AG04449 (cell line): ENCODE measurements at regions of chr5 and their contacts with region 1.

Region 1: GRCh38 chr5:150272526-150272925 is 17.0 kb downstream of the CAMK2A start:
- DNase-seq: no peak
- H3K4me3 ChIP-seq: no peak overlapping the region
- CTCF ChIP-seq: peak; percentile 81

Region 2: GRCh38 chr5:150082374-150082773 is 190.2 kb before region 1 on chr5:
- CTCF ChIA-PET with region 1: no interaction called
- POLR2A ChIA-PET with region 1: no interaction called
- DNase-seq: no peak
- H3K4me3 ChIP-seq: no peak overlapping the region
- CTCF ChIP-seq: no peak

Region 3: GRCh38 chr5:150386024-150386864 is 113.7 kb after region 1 on chr5:
- CTCF ChIA-PET with region 1: no interaction called
- POLR2A ChIA-PET with region 1: no interaction called
- DNase-seq: no peak
- H3K4me3 ChIP-seq: no peak overlapping the region
- CTCF ChIP-seq: no peak

Region 4: DNA sequence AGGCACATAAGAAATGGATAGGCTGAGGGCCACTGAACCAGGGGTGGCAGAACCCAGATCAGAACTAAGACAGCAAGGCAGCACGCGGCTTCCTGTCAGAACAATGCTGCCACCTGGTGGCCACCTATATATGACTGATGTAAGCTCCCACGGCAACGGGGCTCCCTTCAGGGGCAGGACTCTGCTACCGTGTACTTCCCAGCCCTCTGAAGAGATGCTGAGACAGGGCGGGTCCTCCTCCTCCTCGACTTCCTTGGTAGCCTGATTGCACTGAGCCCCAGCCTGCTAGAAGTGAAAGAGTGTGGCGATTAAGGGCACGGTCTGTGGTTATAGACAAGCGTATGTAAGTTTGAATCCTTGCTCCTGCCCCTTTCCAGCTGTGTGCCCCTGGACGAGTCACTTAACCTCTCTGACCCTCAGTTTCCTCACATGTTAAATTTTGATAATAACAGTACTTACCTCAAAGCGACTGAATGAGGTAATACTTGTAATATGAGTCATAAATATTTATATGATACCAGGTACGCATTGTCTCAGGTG is 163.7 kb after region 1 on chr5:
- CTCF ChIA-PET with region 1: interaction called, 54 read pairs
- POLR2A ChIA-PET with region 1: no interaction called
- DNase-seq: peak; percentile 14
- H3K4me3 ChIP-seq: no peak overlapping the region
- CTCF ChIP-seq: peak; percentile 83